Activated CD4-positive, alpha-beta memory T cell treated with anti-CD3 and anti-CD28 coated beads, Interleukin-2, amount 10 ng/mL, durations not matched to agents 7 days and 5 days (primary cell): ENCODE measurements at regions of chr11 and their contacts with region 1.

Region 1: GRCh38 chr11:125111343-125112207 is at the start of gene TMEM218:
- DNase-seq: peak; percentile 98
- H3K4me3 Mint-ChIP-seq: peak within 1 kb of the TSS; percentile 94
- H3K27ac Mint-ChIP-seq: peak within 1 kb of the TSS; percentile 83
- H3K4me1 Mint-ChIP-seq: peaks cover 19% of the 10 kb centered on the region
- H3K27me3 Mint-ChIP-seq: peaks cover 2% of the 10 kb centered on the region
- total RNA-seq, gene TMEM218: 13.7 to 15.6 TPM

Region 2: DNA sequence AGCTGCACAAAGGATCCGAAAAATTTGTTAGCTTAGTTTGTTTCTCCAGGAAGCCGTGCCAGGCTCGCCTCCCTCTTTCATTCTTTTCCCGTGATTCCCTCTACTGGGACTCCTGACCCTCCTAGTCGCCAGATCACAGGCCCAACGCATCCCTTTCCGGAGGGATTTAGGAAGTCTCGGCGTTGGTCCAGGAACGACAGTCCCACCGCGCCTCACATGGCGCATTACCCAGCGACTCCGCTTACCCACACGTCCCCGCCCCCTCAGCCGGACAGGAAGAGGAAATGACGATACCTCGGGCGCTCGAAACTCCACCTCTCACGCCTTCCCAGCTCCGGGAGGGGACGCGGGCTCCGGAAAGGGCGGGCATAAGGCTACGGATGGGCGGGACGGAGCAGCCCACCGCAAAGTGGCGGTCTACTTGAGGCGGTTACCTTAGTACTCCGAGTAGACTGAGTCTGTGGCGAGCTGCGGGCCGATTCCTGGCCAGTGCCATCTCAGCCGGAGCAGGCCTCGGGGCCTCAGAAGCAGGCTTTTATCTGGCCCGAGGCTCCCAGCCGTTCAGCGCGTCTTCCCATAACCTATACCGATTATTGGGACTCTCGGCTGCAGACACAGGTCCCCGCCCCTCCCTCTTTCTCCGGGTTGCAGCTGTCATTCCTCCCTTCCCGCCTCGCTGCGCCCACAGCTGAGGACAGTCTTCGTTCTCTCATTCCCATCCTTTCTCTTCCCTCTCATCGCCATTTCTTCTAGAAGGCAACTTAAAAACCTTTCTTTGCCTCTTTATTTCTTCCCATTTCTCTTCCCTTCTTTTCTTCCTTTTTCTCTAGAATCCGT is 157.6 kb before region 1 on chr11 and contains the start of gene CCDC15:
- CTCF ChIA-PET with region 1: interaction called, 7 read pairs
- POLR2A ChIA-PET with region 1: interaction called, 15 read pairs
- DNase-seq: peak; percentile 97
- H3K4me3 Mint-ChIP-seq: no peak within 1 kb of the TSS
- H3K27ac Mint-ChIP-seq: no peak within 1 kb of the TSS
- H3K4me1 Mint-ChIP-seq: peaks cover 20% of the 10 kb centered on the region
- H3K27me3 Mint-ChIP-seq: no peaks in the 10 kb centered on the region
- total RNA-seq, gene CCDC15: 9.2 to 9.7 TPM